Calu3 (cell line): ENCODE measurements at regions of chr2 and their contacts with region 1.

Region 1: DNA sequence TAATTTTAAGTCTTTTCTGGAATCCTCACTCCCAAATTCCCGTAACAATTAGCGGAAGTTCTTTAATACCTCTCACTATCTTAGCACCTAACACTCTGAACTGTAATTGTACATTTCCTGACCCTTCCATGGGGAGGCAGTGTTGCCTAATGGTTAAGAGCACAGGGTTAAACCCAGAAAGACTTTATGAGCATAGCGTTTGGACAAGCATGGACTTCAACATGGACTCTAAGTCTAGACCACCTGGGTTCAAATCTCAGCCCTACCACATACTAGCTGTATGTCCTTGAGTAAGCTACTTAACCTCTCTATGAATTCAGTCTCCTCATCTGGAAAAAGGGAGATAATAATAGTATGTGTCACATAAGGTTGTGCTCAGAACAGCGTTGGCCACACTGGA is 13.0 kb downstream of the ANTXR1 start:
- DNase-seq: peak; percentile 66
- H3K4me3 Mint-ChIP-seq: no peak overlapping the region
- H3K27ac Mint-ChIP-seq: no peak overlapping the region
- H3K4me1 Mint-ChIP-seq: no peaks in the 10 kb centered on the region
- H3K27me3 Mint-ChIP-seq: peaks cover 15% of the 10 kb centered on the region
- CTCF ChIP-seq: peak; percentile 57

Region 2: DNA sequence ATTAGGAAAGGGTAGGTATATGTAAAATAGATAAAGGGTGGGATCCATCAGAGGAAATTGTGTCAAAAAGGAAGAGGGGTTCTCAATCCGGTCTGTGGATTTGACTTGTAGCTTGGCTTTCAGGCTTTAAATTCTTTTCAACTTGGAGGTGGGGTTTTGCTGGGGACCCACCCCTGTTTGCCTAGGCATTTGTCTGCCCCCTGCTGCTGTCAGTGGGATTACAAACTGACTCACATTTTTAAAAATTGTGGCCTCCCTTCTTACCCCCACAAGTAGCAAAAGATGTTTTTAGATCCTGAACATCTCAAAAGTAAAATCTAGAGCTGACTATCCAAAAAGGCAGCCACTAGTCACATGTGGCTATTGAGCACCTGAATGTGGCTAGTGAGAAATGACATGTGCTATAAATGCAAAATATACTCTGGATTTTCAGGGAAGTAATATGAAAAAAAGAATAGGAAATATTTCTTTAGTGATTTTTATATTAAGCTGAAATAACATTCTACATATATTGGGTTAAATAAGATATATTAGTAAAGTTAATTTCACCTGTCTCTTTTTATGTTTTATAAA is 182.1 kb after region 1 on chr2:
- CTCF ChIA-PET with region 1: no interaction called
- intact Hi-C with region 1: loop called (anchors 5 kb)
- DNase-seq: peak; percentile 3
- H3K4me3 Mint-ChIP-seq: no peak overlapping the region
- H3K27ac Mint-ChIP-seq: no peak overlapping the region
- H3K4me1 Mint-ChIP-seq: no peaks in the 10 kb centered on the region
- H3K27me3 Mint-ChIP-seq: peaks cover 21% of the 10 kb centered on the region
- CTCF ChIP-seq: no peak